Activated CD4-positive, alpha-beta memory T cell treated with anti-CD3 and anti-CD28 coated beads, Interleukin-2, amount 10 ng/mL, durations not matched to agents 7 days and 5 days (primary cell): ENCODE measurements at regions of chr9 and their contacts with region 1.

Region 1: GRCh38 chr9:129811967-129812363 is 9.0 kb downstream of the TOR1B start:
- DNase-seq: no peak
- H3K4me3 Mint-ChIP-seq: no peak overlapping the region
- H3K27ac Mint-ChIP-seq: no peak overlapping the region
- H3K4me1 Mint-ChIP-seq: peaks cover 13% of the 10 kb centered on the region
- H3K27me3 Mint-ChIP-seq: no peaks in the 10 kb centered on the region

Region 2: DNA sequence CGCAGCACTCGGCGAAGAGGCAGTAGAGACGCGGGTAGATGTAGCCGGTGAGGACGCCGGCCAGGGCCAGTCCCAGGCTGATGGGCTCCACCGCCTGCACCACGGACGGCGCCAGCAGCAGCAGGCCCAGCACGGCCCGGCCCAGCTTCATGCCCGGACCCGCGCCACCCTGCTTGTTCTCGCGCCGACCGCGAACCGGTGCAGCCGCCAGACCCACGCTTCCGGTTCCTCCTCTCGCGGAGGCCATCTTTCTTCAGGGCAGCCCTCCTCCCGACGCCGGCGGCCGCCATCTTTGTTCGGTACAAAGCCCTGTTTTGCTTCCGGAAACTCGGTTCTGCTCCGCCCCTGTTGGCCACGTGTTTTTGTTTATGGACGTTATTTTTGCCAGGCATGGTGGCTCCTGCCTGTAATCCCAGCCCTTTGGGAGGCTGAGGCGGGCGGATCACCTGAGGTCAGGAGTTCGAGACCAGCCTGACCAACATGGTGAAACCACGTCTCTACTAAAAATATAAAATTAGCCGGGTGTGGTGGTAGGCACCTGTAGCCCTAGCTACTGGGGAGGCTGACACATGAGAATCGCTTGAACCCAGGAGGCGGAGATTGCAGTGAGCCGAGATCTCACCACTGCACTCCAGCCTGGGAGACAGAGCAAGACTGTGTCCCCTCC is 12.1 kb after region 1 on chr9 and contains the start of gene TOR1A:
- CTCF ChIA-PET with region 1: no interaction called
- POLR2A ChIA-PET with region 1: interaction called, 15 read pairs
- DNase-seq: peak; percentile 95
- H3K4me3 Mint-ChIP-seq: peak within 1 kb of the TSS; percentile 82
- H3K27ac Mint-ChIP-seq: peak within 1 kb of the TSS; percentile 76
- H3K4me1 Mint-ChIP-seq: peaks cover 15% of the 10 kb centered on the region
- H3K27me3 Mint-ChIP-seq: no peaks in the 10 kb centered on the region
- total RNA-seq, gene TOR1A: 54.6 to 56.9 TPM

Region 3: GRCh38 chr9:129840034-129840433 is 28.1 kb after region 1 on chr9:
- CTCF ChIA-PET with region 1: no interaction called
- POLR2A ChIA-PET with region 1: no interaction called
- DNase-seq: no peak
- H3K4me3 Mint-ChIP-seq: no peak overlapping the region
- H3K27ac Mint-ChIP-seq: peak overlapping the region; percentile 44
- H3K4me1 Mint-ChIP-seq: peaks cover 56% of the 10 kb centered on the region
- H3K27me3 Mint-ChIP-seq: no peaks in the 10 kb centered on the region

Region 4: DNA sequence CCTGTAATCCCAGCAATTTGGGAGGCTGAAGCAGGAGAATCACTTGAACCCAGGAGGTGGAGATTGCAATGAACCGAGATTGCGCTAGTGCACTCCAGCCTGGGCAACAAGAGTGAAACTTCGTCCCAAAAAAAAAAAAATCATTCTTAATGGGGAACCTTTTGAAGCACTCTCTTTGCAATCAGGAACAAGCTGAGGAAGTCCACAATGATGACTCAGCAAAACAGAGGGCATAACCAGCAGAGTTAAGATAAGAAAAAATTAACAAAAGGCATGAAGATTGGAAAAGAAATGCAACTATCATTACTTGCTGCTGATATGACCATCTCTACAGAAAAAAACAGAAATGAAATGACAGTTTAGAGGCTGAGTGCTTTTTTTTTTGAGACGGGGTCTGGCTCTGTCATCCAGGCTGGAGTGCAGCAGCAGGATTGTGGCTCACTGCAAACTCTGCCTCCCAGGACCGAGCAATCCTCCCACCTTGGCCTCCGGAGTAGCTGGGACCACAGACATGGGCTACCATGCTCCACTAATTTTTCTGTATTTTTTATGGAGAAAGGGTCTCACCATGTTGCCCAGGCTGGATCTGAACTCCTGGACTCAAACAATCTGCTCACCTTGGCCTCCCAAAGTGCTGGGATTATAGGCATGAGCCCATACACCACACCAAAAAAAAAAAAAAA is 143.0 kb after region 1 on chr9:
- CTCF ChIA-PET with region 1: no interaction called
- POLR2A ChIA-PET with region 1: no interaction called
- DNase-seq: no peak
- H3K4me3 Mint-ChIP-seq: no peak overlapping the region
- H3K27ac Mint-ChIP-seq: peak overlapping the region; percentile 24
- H3K4me1 Mint-ChIP-seq: peaks cover 56% of the 10 kb centered on the region
- H3K27me3 Mint-ChIP-seq: no peaks in the 10 kb centered on the region